ENCODE measurements at regions of chr18 and their contacts with region 1.

Region 1: DNA sequence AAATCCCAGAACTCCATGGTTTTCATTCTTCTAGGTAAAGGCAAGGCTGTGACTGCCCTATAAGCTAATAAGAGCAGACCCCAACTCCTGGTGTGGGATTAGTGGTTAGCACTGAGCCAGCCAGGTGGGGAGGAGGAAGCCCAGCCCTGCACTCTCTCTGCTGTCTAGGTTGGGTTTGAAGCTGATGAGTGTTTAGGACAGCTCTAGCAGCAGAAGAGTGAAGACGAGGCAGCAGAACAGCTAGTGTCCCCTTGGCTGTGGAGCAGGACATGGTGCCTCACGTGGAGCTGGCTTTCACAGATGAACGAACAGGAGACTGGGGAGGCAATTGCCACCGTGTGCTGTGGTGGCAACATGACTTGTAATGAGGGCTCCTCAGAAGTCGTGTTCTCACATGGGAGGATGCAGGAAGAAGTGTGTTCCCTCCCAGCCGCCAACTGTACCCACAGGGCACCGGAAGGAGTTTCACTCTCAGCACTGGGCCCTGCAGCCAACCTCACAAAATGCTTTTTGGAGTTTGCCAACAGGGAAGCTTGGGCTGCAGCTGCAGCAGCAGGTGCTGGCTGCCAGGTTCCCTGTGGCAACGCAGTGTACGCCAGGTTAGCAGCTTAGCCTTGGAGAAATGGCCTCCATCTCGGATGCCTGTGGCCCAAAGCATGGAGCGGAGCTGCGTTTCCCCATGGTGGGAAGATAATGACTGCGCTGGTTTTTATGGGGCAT is 328.2 kb downstream of the SETBP1 start:
- DNase-seq: no peak
- ATAC-seq: peak; percentile 40
- H3K4me3 Mint-ChIP-seq: peak overlapping the region; percentile 55
- H3K27ac Mint-ChIP-seq: peak overlapping the region; percentile 71
- H3K4me1 Mint-ChIP-seq: peaks cover 42% of the 10 kb centered on the region
- H3K27me3 Mint-ChIP-seq: no peaks in the 10 kb centered on the region
- CTCF ChIP-seq: no peak

Region 2: GRCh38 chr18:44996261-44996660 is 12.6 kb before region 1 on chr18:
- CTCF ChIA-PET with region 1: no interaction called
- POLR2A ChIA-PET with region 1: interaction called, 5 read pairs
- intact Hi-C with region 1: loop called (anchors 1 kb)
- DNase-seq: no peak
- ATAC-seq: peak; percentile 71
- H3K4me3 Mint-ChIP-seq: peak overlapping the region; percentile 6
- H3K27ac Mint-ChIP-seq: peak overlapping the region; percentile 74
- H3K4me1 Mint-ChIP-seq: peaks cover 11% of the 10 kb centered on the region
- H3K27me3 Mint-ChIP-seq: no peaks in the 10 kb centered on the region
- CTCF ChIP-seq: no peak

Measured in activated B cell treated with CpG ODN at 0.5 μM for 24 hours (primary cell).